Activated T-helper 2 cell treated with anti-CD3 and anti-CD28 coated beads, Interferon-gamma antibody, Interleukin-2, Interleukin-4, amounts not matched to agents 10 μg/mL and 5 μg/mL and 100 μg/mL, durations not matched to agents 14 hours and 24 hours and 36 hours (primary cell): ENCODE measurements at regions of chr1 and their contacts with region 1.

Region 1: GRCh38 chr1:209747580-209748262 is 8.1 kb upstream of the TRAF3IP3 start:
- DNase-seq: peak; percentile 79
- H3K4me3 Mint-ChIP-seq: peak overlapping the region; percentile 72
- H3K27ac Mint-ChIP-seq: peak overlapping the region; percentile 92
- H3K4me1 Mint-ChIP-seq: peaks cover 68% of the 10 kb centered on the region
- H3K27me3 Mint-ChIP-seq: no peaks in the 10 kb centered on the region

Region 2: DNA sequence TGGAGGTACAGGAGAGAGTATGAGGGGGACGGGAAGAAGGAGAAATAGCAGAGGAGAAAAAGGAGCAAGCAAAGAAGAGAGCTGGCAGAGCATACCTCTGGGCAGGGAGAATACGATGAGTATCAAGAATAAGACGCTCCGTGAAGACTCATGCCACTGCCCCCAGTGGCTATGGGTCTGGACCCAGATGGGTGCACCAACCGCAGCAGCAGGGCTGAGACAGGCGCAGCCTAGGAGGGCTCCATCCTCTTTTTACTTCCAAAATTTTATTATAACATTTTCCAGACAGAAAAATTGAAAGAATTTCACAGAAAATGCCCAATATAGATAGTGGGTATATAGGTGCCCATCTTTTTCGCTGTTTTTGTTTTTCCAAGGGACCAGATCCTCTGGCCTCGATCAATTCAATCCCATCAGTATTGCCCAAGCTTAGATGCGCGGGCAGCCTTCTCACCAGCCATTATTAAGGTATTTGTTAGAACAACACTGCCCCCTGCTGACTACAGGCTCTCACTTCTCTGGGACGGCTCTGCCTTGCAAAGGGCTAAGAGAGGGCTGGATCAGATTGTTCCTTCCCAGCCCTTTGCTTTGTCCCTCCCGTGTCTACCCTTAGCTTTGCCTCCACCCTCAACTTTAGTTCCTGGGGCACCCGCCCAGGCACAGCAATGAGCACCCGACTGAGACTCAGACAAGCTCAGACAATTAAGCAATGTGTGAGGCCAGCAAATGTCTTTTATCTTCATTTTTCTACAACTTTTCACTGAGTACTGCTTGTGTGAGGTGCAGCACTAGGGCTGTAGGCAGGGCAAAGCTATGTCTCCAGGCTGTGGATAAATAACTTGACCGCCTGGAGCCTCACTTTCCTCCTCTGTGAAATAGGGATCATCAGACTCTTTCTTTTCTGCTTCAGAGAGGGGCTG is 181.7 kb before region 1 on chr1:
- intact Hi-C with region 1: loop called (anchors 1 kb)
- DNase-seq: peak; percentile 57
- H3K4me3 Mint-ChIP-seq: no peak overlapping the region
- H3K27ac Mint-ChIP-seq: no peak overlapping the region
- H3K4me1 Mint-ChIP-seq: peaks cover 19% of the 10 kb centered on the region
- H3K27me3 Mint-ChIP-seq: peaks cover 17% of the 10 kb centered on the region

Region 3: DNA sequence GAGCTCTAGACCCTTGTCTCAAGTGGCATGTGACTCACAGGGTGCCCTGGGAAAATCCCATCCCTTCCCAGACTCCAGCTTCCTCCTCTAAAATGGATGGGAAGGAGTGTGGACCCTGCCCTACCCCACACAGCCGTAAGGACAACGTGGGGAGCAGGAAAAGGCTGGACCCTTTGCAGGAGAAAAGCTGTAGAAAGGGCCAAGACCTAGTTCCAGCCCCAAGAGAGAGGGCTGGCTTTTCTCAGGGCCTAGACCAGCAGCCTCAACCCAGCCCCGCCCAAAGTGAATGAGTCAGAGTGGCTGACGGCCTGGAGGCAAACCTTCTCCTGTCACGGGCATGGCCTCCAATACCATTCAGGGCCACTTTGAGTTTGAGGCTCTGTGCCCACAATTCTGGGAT is 96.6 kb before region 1 on chr1:
- intact Hi-C with region 1: loop called (anchors 5 kb)
- DNase-seq: peak; percentile 65
- H3K4me3 Mint-ChIP-seq: no peak overlapping the region
- H3K27ac Mint-ChIP-seq: peak overlapping the region; percentile 83
- H3K4me1 Mint-ChIP-seq: peaks cover 55% of the 10 kb centered on the region
- H3K27me3 Mint-ChIP-seq: no peaks in the 10 kb centered on the region

Region 4: DNA sequence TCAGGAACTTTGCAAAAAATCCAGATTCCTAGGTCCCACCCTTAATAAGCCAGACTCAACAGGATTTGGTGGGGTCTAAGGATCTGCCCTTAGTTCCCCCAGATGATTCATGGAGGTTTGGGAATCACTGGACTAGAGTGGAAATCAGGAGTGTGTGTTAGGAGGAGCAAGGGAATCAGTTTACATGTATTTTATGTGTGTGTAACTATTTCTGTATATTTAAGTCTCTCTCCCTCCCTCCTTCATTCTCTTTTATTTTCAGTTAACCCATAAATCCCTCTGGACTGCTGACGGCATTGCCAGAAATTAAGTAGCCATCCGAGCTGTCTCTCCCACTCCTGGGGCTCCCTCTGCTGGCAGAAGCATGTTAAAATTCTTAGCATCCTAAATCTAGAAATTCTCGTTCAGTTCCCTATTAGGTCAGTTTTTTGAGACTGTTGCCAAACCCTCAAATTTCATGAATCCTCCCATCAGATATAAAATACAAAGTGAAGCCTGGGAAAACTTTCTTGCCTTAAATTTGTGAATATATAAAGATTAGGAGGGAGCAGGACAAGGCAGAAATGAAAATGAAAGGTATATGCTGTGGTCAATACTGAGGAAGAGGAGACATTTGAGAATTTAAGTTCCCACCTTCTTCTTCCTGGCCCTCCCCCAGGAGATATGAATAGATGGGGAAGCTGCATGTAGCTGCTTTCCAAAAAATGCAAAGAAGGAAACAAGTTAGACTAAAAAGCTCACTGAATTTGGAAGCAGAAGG is 54.8 kb before region 1 on chr1:
- intact Hi-C with region 1: loop called (anchors 1 kb)
- DNase-seq: peak; percentile 50
- H3K4me3 Mint-ChIP-seq: no peak overlapping the region
- H3K27ac Mint-ChIP-seq: peak overlapping the region; percentile 53
- H3K4me1 Mint-ChIP-seq: peaks cover 43% of the 10 kb centered on the region
- H3K27me3 Mint-ChIP-seq: no peaks in the 10 kb centered on the region

Region 5: GRCh38 chr1:209704584-209704983 is 43.1 kb before region 1 on chr1 and contains the start of gene HSD11B1:
- intact Hi-C with region 1: no loop called
- DNase-seq: no peak
- H3K4me3 Mint-ChIP-seq: peak within 1 kb of the TSS; percentile 40
- H3K27ac Mint-ChIP-seq: peak within 1 kb of the TSS; percentile 82
- H3K4me1 Mint-ChIP-seq: peaks cover 68% of the 10 kb centered on the region
- H3K27me3 Mint-ChIP-seq: no peaks in the 10 kb centered on the region
- total RNA-seq, gene HSD11B1: 8.2 and 8.6 TPM in 2 replicates

Region 6: DNA sequence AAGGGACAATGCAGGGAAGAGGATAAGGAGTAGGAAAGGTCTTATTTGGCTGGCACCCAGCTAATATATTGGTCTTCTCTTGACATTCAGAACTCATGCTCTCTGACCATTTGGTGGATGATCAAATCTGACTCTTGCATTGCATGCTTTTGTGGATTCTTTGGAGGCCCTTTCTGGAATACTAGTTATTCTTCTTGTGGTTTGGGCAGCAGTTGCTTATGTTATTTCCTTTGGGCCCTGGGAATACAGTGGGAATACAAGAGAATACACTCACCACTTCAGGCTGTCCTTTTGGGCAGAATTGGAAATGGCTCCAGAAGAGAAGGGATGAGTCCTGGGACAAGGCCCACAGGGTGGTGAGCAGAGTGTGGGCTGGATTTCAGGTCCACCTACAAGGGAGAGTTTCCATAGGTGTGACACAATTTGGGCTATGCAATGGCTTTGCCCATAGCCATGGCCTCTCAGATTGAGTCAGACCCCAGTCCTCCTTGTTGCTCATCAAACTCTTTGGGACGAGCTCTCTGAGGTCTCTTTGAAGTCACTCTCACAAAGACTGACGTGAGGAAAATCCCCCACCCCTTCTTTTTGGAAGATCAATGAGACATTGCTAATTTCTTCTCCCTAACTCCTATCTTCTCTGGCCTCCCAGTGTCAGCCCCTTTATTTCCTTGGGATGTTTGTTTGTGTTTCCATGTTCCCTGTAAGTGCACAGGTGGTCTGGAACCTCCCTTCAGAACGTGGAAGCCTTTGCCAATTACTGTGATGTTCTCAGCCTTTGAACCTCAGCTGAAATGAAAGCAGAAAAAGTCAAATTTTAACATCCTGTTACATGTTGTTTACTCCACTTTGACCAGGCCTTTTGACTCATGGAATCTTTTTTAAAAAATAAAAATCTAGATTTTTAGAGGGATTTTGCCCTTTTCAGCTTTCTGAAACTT is 23.7 kb before region 1 on chr1:
- intact Hi-C with region 1: loop called (anchors 1 kb)
- DNase-seq: peak; percentile 16
- H3K4me3 Mint-ChIP-seq: peak overlapping the region; percentile 60
- H3K27ac Mint-ChIP-seq: peak overlapping the region; percentile 100
- H3K4me1 Mint-ChIP-seq: peaks cover 67% of the 10 kb centered on the region
- H3K27me3 Mint-ChIP-seq: no peaks in the 10 kb centered on the region

Region 7: DNA sequence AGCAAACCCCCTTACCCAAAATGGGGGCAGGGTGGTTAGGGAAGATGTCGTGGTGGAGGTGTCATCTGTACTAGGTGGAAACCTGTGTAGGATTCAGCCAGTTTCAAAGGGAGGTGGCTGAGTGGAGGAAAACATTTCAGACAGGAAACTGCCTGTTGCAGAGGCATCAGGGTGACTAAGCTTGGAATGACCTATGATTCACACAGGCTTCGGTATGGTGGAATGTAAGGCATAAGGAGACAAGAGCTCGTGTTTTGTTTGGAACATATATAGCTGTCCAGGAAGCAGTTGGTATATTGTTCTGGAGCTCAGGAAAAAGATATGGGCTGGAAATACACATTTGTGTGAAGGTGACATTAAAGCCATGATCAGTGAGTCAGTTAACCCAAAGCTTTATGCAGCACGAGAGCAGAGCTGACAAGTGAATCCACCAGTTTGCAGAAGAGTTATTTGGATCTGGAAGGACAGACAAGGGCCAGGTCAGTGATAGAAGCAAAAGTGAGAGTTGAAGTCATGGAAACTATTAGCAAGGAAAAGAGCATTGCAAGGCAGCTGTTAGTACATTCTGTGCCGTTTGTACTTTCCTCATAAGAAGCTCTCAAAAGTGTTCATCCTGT is 92.3 kb after region 1 on chr1:
- intact Hi-C with region 1: loop called (anchors 1 kb)
- DNase-seq: no peak
- H3K4me3 Mint-ChIP-seq: peak overlapping the region; percentile 49
- H3K27ac Mint-ChIP-seq: peak overlapping the region; percentile 91
- H3K4me1 Mint-ChIP-seq: peaks cover 53% of the 10 kb centered on the region
- H3K27me3 Mint-ChIP-seq: no peaks in the 10 kb centered on the region